ENCODE measurements at regions of chr2 and their contacts with region 1.

Region 1: DNA sequence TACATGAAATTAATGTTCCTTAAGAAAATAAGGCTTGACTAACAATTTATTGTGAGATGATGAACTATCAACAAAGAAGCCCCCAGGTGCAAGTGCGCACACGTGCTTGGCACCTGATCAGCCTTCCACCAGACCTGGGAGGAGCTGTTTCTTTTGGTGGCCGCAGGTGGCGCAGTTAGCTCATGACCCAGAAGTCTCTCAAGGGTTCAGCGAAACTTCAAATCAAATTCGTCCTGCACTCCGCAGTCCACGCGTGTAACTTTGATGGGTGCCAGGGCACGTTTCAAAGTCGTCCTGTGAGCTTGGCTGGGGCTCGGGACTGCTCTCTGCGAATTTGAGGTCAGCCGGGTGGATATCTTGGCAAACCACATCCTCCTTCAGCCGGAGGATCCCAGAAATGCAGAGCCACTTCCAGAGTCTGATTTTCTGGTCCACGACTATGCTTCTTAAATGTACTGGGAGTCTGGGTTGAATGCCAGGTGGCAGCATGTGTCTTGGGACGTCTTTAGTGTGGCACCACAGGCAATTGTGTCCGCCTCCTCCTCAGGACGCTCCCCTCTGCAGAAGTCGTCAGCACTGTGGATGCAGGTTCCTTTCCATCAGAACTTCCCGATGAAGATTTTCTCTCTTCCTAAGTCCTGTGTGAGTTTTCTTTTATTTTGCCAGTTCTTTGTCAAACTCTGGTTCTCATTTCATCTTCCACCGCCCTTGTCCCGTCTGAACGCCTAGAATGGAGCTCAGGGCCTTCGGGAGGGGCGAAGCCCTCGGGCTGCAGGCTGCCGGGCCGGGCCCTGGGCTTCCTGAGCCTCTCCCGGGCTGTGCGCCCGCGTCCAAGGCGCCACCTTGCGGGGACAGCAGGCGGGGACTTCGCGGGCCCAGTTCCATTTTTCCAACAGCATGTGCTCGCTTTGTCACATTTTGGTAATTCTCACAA is 61.3 kb upstream of the RAPGEF4 start:
- DNase-seq: peak; percentile 81
- ATAC-seq: peak; percentile 100
- H3K4me3 Mint-ChIP-seq: peak overlapping the region; percentile 11
- H3K27ac Mint-ChIP-seq: no peak overlapping the region
- H3K4me1 Mint-ChIP-seq: peaks cover 8% of the 10 kb centered on the region
- H3K27me3 Mint-ChIP-seq: peaks cover 30% of the 10 kb centered on the region
- CTCF ChIP-seq: peak; percentile 50

Region 2: GRCh38 chr2:172484253-172484652 is 190.0 kb before region 1 on chr2:
- CTCF ChIA-PET with region 1: interaction called, 13 read pairs
- POLR2A ChIA-PET with region 1: no interaction called
- DNase-seq: no peak
- ATAC-seq: no peak
- H3K4me3 Mint-ChIP-seq: no peak overlapping the region
- H3K27ac Mint-ChIP-seq: no peak overlapping the region
- H3K4me1 Mint-ChIP-seq: 0 out of 2 replicates have a peak, but pooled peaks cover 3% of the 10 kb centered on the region
- H3K27me3 Mint-ChIP-seq: no peaks in the 10 kb centered on the region
- CTCF ChIP-seq: no peak

Region 3: DNA sequence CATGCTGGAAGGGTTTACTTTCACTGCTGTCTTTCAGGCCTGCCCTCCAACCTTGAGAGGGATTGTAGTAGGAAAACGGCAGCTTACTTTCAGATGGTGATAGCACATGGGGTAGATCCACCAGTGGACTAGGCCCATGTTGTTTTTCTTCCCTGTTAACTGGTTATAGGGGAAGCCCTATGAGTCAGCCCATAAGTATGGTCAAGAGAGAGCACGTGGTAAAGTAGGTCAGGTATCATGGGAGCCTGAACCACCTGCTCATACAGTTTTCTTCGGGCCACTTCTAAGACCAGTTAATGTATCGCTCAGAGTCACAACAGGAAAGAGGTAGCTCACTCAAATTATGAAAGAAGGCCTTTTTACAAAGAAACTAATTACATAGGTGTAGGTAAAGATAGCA is 85.4 kb before region 1 on chr2:
- CTCF ChIA-PET with region 1: interaction called, 57 read pairs
- POLR2A ChIA-PET with region 1: no interaction called
- DNase-seq: no peak
- ATAC-seq: no peak
- H3K4me3 Mint-ChIP-seq: no peak overlapping the region
- H3K27ac Mint-ChIP-seq: no peak overlapping the region
- H3K4me1 Mint-ChIP-seq: peaks cover 14% of the 10 kb centered on the region
- H3K27me3 Mint-ChIP-seq: no peaks in the 10 kb centered on the region
- CTCF ChIP-seq: no peak

Region 4: DNA sequence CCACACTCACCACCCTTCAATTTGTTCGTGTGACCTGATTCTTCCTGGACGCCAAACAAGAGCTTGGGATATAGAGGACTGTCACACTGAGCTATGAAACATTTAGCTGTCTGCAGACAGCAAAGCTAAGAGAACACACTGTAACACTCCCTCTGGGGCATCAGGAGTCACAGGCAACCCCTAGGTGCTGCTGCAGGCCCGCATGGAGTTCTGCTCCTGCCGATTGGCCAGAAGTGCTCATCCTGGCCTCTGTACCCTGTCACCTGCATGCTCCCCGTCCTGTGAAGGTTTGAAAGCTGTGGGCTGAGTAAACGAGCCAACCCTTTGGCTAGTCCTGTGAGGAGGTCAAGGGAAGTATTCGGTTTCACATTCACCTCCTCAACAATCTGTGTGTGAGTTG is 44.7 kb before region 1 on chr2:
- CTCF ChIA-PET with region 1: interaction called, 14 read pairs
- POLR2A ChIA-PET with region 1: no interaction called
- DNase-seq: no peak
- ATAC-seq: peak; percentile 56; the same call in 1 of the 2 replicates
- H3K4me3 Mint-ChIP-seq: no peak overlapping the region
- H3K27ac Mint-ChIP-seq: no peak overlapping the region
- H3K4me1 Mint-ChIP-seq: no peaks in the 10 kb centered on the region
- H3K27me3 Mint-ChIP-seq: no peaks in the 10 kb centered on the region
- CTCF ChIP-seq: no peak

Region 5: GRCh38 chr2:172662099-172662498 is 12.2 kb before region 1 on chr2:
- CTCF ChIA-PET with region 1: interaction called, 14 read pairs
- POLR2A ChIA-PET with region 1: no interaction called
- DNase-seq: no peak
- ATAC-seq: no peak
- H3K4me3 Mint-ChIP-seq: no peak overlapping the region
- H3K27ac Mint-ChIP-seq: no peak overlapping the region
- H3K4me1 Mint-ChIP-seq: peaks cover 6% of the 10 kb centered on the region
- H3K27me3 Mint-ChIP-seq: peaks cover 4% of the 10 kb centered on the region
- CTCF ChIP-seq: no peak

Region 6: GRCh38 chr2:172710584-172711024 is 36.3 kb after region 1 on chr2:
- CTCF ChIA-PET with region 1: interaction called, 19 read pairs
- POLR2A ChIA-PET with region 1: no interaction called
- DNase-seq: peak; percentile 38
- ATAC-seq: peak; percentile 81
- H3K4me3 Mint-ChIP-seq: no peak overlapping the region
- H3K27ac Mint-ChIP-seq: no peak overlapping the region
- H3K4me1 Mint-ChIP-seq: no peaks in the 10 kb centered on the region
- H3K27me3 Mint-ChIP-seq: no peaks in the 10 kb centered on the region
- CTCF ChIP-seq: peak; percentile 50; the same call in 1 of the 2 replicates

Measured in WTC11 (cell line).